ENCODE measurements at regions of chr4 and their contacts with region 1.

Region 1: DNA sequence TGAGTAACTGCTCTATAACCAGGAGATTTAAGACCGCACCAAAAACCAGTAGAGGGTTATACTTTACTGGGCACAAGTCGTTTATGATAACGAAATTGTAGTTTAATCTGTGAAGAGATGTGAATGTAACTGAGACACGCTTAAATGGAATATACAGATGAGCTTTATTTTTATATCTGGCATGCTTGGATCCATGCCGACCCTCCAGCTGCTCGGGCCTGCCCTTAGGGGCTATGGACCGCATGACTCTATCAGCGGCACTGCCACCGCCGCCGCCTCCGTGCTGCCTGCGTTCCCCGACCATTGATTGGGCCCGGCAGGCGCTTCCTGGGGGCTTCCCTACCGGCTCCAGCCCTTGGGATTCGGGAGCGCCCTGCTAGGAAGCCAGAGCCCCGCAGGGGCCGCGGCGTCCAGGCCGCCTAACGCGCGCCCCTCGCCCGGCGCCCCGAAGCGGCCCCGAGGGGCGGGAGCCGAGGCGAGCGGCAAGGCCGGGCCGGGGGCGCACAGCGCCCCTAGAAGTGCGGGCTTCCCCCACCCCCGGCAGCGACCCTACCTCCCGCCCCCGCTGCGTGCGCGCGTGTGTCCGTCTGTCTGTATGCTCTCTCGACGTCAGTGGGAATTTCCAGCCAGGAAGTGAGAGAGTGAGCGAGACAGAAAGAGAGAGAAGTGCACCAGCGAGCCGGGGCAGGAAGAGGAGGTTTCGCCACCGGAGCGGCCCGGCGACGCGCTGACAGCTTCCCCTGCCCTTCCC is at the start of gene NFKB1:
- DNase-seq: peak; percentile 89
- ATAC-seq: peak; percentile 67
- H3K4me3 ChIP-seq: peak within 1 kb of the TSS; percentile 70
- H3K27ac ChIP-seq: peak within 1 kb of the TSS; percentile 86
- H3K4me1 ChIP-seq: peaks cover 3% of the 10 kb centered on the region; the same call in 1 of the 2 replicates
- H3K27me3 ChIP-seq: no peaks in the 10 kb centered on the region
- CTCF ChIP-seq: no peak
- POLR2A ChIP-seq: peak; percentile 72; the same call in 1 of the 2 replicates
- RAD21 ChIP-seq: no peak
- total RNA-seq, gene NFKB1: 23.6 and 24.6 TPM in 2 replicates

Region 2: GRCh38 chr4:101977076-101977475 is 523.8 kb before region 1 on chr4:
- CTCF ChIA-PET with region 1: no interaction called
- POLR2A ChIA-PET with region 1: no interaction called
- dilution Hi-C with region 1: no loop called
- in situ Hi-C with region 1: no loop called
- intact Hi-C with region 1: no loop called
- DNase-seq: peak; percentile 94
- ATAC-seq: peak; percentile 87
- H3K4me3 ChIP-seq: no peak overlapping the region
- H3K27ac ChIP-seq: no peak overlapping the region
- H3K4me1 ChIP-seq: no peaks in the 10 kb centered on the region
- H3K27me3 ChIP-seq: no peaks in the 10 kb centered on the region
- CTCF ChIP-seq: no peak
- POLR2A ChIP-seq: no peak
- RAD21 ChIP-seq: no peak

Region 3: DNA sequence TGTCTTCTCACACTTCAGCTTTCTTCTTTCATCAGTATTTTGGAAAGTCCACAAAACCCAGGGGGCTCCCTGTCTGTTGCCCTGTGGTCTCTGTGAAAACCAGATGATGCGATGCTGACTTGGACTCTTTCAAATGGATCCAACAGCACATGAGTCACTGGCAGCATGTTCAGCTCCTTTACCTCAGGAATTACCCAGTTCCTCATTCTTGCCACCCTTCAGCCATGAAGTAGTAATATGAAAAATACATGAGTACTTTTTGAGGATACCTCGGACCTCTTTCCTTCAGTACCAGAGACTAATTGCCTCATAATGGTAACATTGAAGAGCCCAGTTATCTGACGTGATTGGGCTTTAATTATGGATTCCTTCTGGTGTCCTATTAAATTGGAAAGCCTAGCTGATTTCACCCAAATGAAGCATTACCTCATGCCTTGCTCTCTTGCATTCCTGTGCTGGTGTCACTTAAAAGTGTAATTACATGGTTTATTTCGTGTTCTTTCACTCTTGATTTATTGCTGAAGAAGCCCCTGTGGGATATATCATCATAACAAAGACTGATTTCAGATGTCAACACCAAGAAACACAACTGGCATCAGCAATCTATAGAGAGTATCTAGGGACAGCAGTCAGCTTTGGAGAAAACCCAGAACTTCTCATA is 63.7 kb after region 1 on chr4:
- CTCF ChIA-PET with region 1: interaction called, 3 read pairs
- POLR2A ChIA-PET with region 1: no interaction called
- dilution Hi-C with region 1: no loop called
- in situ Hi-C with region 1: no loop called
- intact Hi-C with region 1: loop called (anchors 1 kb)
- DNase-seq: peak; percentile 81
- ATAC-seq: no peak
- H3K4me3 ChIP-seq: no peak overlapping the region
- H3K27ac ChIP-seq: no peak overlapping the region
- H3K4me1 ChIP-seq: peaks cover 5% of the 10 kb centered on the region
- H3K27me3 ChIP-seq: no peaks in the 10 kb centered on the region
- CTCF ChIP-seq: no peak
- POLR2A ChIP-seq: no peak
- RAD21 ChIP-seq: no peak

Region 4: DNA sequence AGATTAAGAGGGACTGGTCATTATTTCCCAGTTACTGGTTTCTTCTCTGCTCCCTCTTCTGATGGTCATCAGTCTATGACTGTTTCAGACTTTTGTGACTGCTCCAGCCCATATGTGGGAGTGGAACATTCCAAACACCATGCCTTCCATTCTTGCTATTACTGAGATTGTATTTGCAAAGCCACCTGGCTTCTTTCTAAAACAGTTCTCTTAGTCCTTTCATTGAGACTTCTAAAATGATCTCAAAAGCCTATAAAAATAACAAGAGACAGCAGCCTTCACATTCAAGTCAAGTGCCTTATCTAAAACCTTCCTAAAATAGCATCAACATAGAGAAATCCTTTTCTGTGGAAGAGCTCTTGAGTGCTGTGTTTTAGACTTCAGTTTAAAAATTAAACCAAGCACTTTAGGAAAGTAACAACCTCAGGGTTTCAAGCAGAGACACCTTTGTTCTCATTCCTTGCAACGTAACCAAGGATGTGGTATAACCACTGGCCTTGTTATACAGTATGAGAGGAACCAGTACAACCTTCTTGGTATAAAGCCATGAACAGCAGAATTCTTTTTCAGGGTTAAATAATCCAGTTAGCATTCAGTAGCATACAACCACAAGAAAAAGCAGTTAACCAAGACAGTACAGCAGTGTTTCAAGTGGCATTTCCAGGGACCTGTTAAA is 97.4 kb after region 1 on chr4:
- CTCF ChIA-PET with region 1: no interaction called
- POLR2A ChIA-PET with region 1: no interaction called
- dilution Hi-C with region 1: no loop called
- in situ Hi-C with region 1: no loop called
- intact Hi-C with region 1: loop called (anchors 10 kb)
- DNase-seq: peak; percentile 45
- ATAC-seq: peak; percentile 73
- H3K4me3 ChIP-seq: no peak overlapping the region
- H3K27ac ChIP-seq: no peak overlapping the region
- H3K4me1 ChIP-seq: peaks cover 11% of the 10 kb centered on the region
- H3K27me3 ChIP-seq: no peaks in the 10 kb centered on the region
- CTCF ChIP-seq: no peak
- POLR2A ChIP-seq: no peak
- RAD21 ChIP-seq: no peak

Region 5: DNA sequence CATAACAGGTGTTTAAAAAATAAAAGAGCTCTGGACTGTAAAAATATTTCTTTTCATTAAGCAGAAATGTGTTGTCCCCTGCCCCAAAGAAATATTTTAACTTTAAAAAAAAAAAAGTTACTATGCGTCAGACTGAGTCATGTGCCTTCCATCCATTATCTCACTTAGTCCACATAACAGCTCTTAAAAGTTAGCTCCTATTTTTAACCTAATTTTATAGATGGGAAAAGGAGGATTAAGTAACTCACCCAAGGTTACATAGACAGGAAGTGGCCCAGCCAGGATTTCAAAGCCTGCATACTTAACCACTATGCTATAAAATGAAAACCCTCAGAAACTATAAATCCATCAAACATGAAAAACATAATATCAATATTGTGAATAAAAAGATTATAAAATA is 162.2 kb after region 1 on chr4:
- CTCF ChIA-PET with region 1: no interaction called
- POLR2A ChIA-PET with region 1: no interaction called
- dilution Hi-C with region 1: no loop called
- in situ Hi-C with region 1: no loop called
- intact Hi-C with region 1: no loop called
- DNase-seq: peak; percentile 80
- ATAC-seq: peak; percentile 59
- H3K4me3 ChIP-seq: no peak overlapping the region
- H3K27ac ChIP-seq: no peak overlapping the region
- H3K4me1 ChIP-seq: no peaks in the 10 kb centered on the region; the same call in 1 of the 2 replicates
- H3K27me3 ChIP-seq: no peaks in the 10 kb centered on the region
- CTCF ChIP-seq: no peak
- POLR2A ChIP-seq: no peak
- RAD21 ChIP-seq: no peak